Gastrocnemius medialis (tissue), 4 donors: ENCODE measurements at regions of chr1 and their contacts with region 1.

Region 1: DNA sequence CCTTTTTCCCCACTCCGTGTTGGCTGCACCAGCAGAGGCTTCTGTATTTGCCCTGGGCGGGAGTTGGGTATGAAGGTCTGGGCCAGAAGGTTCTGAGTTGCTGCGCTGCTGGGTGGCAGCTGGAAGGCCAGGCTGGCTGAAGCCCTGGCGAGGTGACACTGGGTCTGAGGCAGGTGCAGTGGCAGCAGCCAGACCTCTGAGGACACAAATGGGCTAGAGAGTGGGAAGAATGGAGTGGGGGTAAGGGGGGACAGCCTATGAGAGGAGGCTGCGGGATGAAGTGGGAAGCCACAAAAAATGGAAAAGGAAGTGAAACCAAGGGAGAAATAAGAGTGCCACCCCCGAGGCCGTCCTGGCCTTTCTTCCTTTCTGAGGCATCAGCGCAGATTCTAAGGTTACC is 53.2 kb downstream of the STX6 start:
- DNase-seq: peak in 1 of 2 donors; percentile 64
- ATAC-seq: peak; percentile 23 to 66
- H3K4me3 ChIP-seq: no peak overlapping the region
- H3K27ac ChIP-seq: peak overlapping the region; percentile 84 to 87 (median 86)
- H3K4me1 ChIP-seq: peaks cover 54 to 57% of the 10 kb centered on the region in 2 donors
- H3K27me3 ChIP-seq: no peaks in the 10 kb centered on the region
- CTCF ChIP-seq: no peak
- POLR2A ChIP-seq: no peak

Region 2: GRCh38 chr1:180954005-180954800 is 15.2 kb before region 1 on chr1:
- in situ Hi-C with region 1: no loop called
- intact Hi-C with region 1: loop called (anchors 2 kb)
- DNase-seq: peak in 1 of 2 donors; percentile 41
- ATAC-seq: peak; percentile 39 to 41
- H3K4me3 ChIP-seq: peak overlapping the region; percentile 48 to 87 (median 62)
- H3K27ac ChIP-seq: peak overlapping the region; percentile 67 to 77 (median 72)
- H3K4me1 ChIP-seq: peaks cover 29 to 43% of the 10 kb centered on the region in 2 donors
- H3K27me3 ChIP-seq: no peaks in the 10 kb centered on the region
- CTCF ChIP-seq: peak in 2 of 5 experiments; percentile 0 to 18
- POLR2A ChIP-seq: no peak

Region 3: GRCh38 chr1:181021811-181022434 is 52.5 kb after region 1 on chr1:
- in situ Hi-C with region 1: no loop called
- intact Hi-C with region 1: loop called (anchors 2 kb)
- DNase-seq: peak; percentile 38 to 45
- ATAC-seq: peak; percentile 56 to 60
- H3K4me3 ChIP-seq: peak overlapping the region; percentile 68 to 99 (median 85)
- H3K27ac ChIP-seq: peak overlapping the region; percentile 88 to 98 (median 96)
- H3K4me1 ChIP-seq: peaks cover 13 to 20% of the 10 kb centered on the region in 2 donors
- H3K27me3 ChIP-seq: no peaks in the 10 kb centered on the region
- CTCF ChIP-seq: no peak
- POLR2A ChIP-seq: no peak

Region 4: GRCh38 chr1:181251001-181251712 is 281.7 kb after region 1 on chr1:
- in situ Hi-C with region 1: no loop called
- intact Hi-C with region 1: no loop called
- DNase-seq: no peak
- ATAC-seq: no peak
- H3K4me3 ChIP-seq: no peak overlapping the region
- H3K27ac ChIP-seq: no peak overlapping the region
- H3K4me1 ChIP-seq: peaks cover 0 to 10% of the 10 kb centered on the region in 2 donors
- H3K27me3 ChIP-seq: no peaks in the 10 kb centered on the region
- CTCF ChIP-seq: no peak
- POLR2A ChIP-seq: no peak